ENCODE measurements at regions of chr12 and their contacts with region 1.

Region 1: DNA sequence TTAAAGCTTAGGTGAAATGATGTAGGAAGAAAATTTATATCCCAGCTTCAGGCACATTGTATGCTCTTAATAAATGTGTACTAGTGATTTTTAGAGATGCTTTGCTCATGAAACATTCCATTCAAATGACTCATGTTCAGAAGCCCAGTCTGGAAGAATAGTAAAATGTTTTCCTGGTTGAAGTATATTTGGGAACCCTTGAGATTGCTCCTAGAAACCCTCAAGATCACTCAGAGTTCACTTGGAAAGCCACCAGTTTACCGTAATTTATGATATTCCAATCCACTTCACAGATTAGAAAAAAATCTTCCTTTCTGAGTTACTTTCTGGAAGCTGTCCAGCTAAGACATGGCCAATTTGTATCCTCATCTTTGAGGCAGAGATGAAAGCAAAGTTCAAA is 186.4 kb downstream of the SYT10 start:
- DNase-seq: no peak
- ATAC-seq: no peak
- H3K4me3 ChIP-seq: no peak overlapping the region
- H3K4me3 Mint-ChIP-seq: no peak overlapping the region
- H3K27ac ChIP-seq: no peak overlapping the region
- H3K27ac Mint-ChIP-seq: no peak overlapping the region
- H3K4me1 ChIP-seq: no peaks in the 10 kb centered on the region
- H3K4me1 Mint-ChIP-seq: no peaks in the 10 kb centered on the region
- H3K27me3 ChIP-seq: no peaks in the 10 kb centered on the region
- H3K27me3 Mint-ChIP-seq: peaks cover 0 to 6% (median 0%) of the 10 kb centered on the region in 5 donors

Region 2: GRCh38 chr12:33322519-33322918 is 69.3 kb after region 1 on chr12:
- CTCF ChIA-PET with region 1: no interaction called
- POLR2A ChIA-PET with region 1: no interaction called
- intact Hi-C with region 1: loop called in 1 of 2 experiments (anchors 10 kb)
- DNase-seq: no peak
- ATAC-seq: no peak
- H3K4me3 ChIP-seq: no peak overlapping the region
- H3K4me3 Mint-ChIP-seq: no peak overlapping the region
- H3K27ac ChIP-seq: no peak overlapping the region
- H3K27ac Mint-ChIP-seq: no peak overlapping the region
- H3K4me1 ChIP-seq: no peaks in the 10 kb centered on the region
- H3K4me1 Mint-ChIP-seq: no peaks in the 10 kb centered on the region
- H3K27me3 ChIP-seq: no peaks in the 10 kb centered on the region
- H3K27me3 Mint-ChIP-seq: no peaks in the 10 kb centered on the region

Region 3: GRCh38 chr12:33439282-33440011 is 186.3 kb after region 1 on chr12 and contains the start of gene SYT10:
- CTCF ChIA-PET with region 1: no interaction called
- POLR2A ChIA-PET with region 1: no interaction called
- intact Hi-C with region 1: no loop called
- DNase-seq: no peak
- ATAC-seq: no peak
- H3K4me3 ChIP-seq: no peak within 1 kb of the TSS
- H3K4me3 Mint-ChIP-seq: peak within 1 kb of the TSS in 9 of 10 donors; percentile 38 to 78 (median 62)
- H3K27ac ChIP-seq: no peak within 1 kb of the TSS
- H3K27ac Mint-ChIP-seq: no peak within 1 kb of the TSS
- H3K4me1 ChIP-seq: no peaks in the 10 kb centered on the region
- H3K4me1 Mint-ChIP-seq: peaks cover 0 to 8% (median 4%) of the 10 kb centered on the region in 7 donors
- H3K27me3 ChIP-seq: no peaks in the 10 kb centered on the region
- H3K27me3 Mint-ChIP-seq: peaks cover 36 to 51% (median 43%) of the 10 kb centered on the region in 5 donors
- total RNA-seq, gene SYT10: not detected